Ascending aorta (tissue), 2 donors: ENCODE measurements at regions of chr1 and their contacts with region 1.

Region 1: GRCh38 chr1:62082456-62083363 is 111.9 kb upstream of the L1TD1 start:
- DNase-seq: no peak
- H3K4me3 ChIP-seq: no peak overlapping the region
- H3K27ac ChIP-seq: peak overlapping the region in 1 of 2 donors; percentile 5
- H3K4me1 ChIP-seq: no peaks in the 10 kb centered on the region
- H3K27me3 ChIP-seq: no peaks in the 10 kb centered on the region
- CTCF ChIP-seq: peak; percentile 7 to 94 (median 85)

Region 2: DNA sequence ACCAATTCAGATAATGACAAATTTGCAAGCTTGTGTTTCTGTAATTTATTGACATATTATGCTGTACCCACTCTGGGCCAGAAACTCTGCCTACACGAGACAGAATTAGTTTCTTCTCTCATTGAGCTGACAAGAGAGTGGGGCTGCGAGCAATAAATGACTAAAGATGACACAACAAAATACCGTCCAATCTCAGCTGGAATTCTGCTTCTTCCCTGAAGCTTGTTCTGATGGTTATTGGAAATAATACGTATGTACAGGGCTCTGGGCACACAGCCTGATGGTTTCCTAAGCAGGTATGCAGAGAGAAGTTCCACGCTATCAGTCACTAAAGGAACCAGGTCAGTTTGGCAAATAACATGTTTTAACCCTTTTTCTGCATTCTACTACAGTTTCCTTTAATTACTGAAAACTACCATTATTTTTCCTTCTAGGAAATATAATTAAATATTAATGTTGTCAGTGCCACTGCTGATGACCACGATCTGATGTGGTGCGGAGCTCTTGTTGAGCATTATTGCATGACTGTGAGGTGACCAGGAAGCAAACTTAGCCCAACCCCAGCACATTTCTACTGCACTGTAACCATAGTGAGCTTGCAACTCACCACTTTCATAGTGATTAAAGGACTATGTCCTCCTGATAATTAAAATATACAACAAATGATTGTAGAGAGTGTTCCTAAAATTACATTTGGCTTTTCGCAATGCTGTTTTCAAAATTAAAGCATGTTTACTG is 109.4 kb before region 1 on chr1:
- intact Hi-C with region 1: no loop called
- DNase-seq: no peak
- H3K4me3 ChIP-seq: no peak overlapping the region
- H3K27ac ChIP-seq: no peak overlapping the region
- H3K4me1 ChIP-seq: no peaks in the 10 kb centered on the region
- H3K27me3 ChIP-seq: no peaks in the 10 kb centered on the region
- CTCF ChIP-seq: no peak

Region 3: GRCh38 chr1:62117018-62117750 is 34.5 kb after region 1 on chr1:
- intact Hi-C with region 1: loop called (anchors 5 kb)
- DNase-seq: no peak
- H3K4me3 ChIP-seq: no peak overlapping the region
- H3K27ac ChIP-seq: no peak overlapping the region
- H3K4me1 ChIP-seq: no peaks in the 10 kb centered on the region
- H3K27me3 ChIP-seq: no peaks in the 10 kb centered on the region
- CTCF ChIP-seq: no peak

Region 4: GRCh38 chr1:62131093-62131725 is 48.5 kb after region 1 on chr1:
- intact Hi-C with region 1: loop called (anchors 2 kb)
- DNase-seq: no peak
- H3K4me3 ChIP-seq: no peak overlapping the region
- H3K27ac ChIP-seq: no peak overlapping the region
- H3K4me1 ChIP-seq: no peaks in the 10 kb centered on the region
- H3K27me3 ChIP-seq: no peaks in the 10 kb centered on the region
- CTCF ChIP-seq: peak; percentile 8 to 71 (median 54)